CD8-positive, alpha-beta memory T cell (primary cell): ENCODE measurements at regions of chr15 and their contacts with region 1.

Region 1: GRCh38 chr15:84633311-84634227 is 20.5 kb downstream of the WDR73 start:
- DNase-seq: peak; percentile 44 to 75 (median 63)
- H3K4me3 ChIP-seq: peak overlapping the region; percentile 82
- H3K4me3 Mint-ChIP-seq: peak overlapping the region; percentile 86 to 99 (median 95)
- H3K27ac ChIP-seq: peak overlapping the region; percentile 66
- H3K27ac Mint-ChIP-seq: peak overlapping the region; percentile 89 to 97 (median 94)
- H3K4me1 ChIP-seq: peaks cover 52% of the 10 kb centered on the region
- H3K4me1 Mint-ChIP-seq: peaks cover 41 to 54% (median 49%) of the 10 kb centered on the region in 3 donors
- H3K27me3 ChIP-seq: no peaks in the 10 kb centered on the region
- H3K27me3 Mint-ChIP-seq: peaks cover 0 to 2% of the 10 kb centered on the region in 2 donors

Region 2: DNA sequence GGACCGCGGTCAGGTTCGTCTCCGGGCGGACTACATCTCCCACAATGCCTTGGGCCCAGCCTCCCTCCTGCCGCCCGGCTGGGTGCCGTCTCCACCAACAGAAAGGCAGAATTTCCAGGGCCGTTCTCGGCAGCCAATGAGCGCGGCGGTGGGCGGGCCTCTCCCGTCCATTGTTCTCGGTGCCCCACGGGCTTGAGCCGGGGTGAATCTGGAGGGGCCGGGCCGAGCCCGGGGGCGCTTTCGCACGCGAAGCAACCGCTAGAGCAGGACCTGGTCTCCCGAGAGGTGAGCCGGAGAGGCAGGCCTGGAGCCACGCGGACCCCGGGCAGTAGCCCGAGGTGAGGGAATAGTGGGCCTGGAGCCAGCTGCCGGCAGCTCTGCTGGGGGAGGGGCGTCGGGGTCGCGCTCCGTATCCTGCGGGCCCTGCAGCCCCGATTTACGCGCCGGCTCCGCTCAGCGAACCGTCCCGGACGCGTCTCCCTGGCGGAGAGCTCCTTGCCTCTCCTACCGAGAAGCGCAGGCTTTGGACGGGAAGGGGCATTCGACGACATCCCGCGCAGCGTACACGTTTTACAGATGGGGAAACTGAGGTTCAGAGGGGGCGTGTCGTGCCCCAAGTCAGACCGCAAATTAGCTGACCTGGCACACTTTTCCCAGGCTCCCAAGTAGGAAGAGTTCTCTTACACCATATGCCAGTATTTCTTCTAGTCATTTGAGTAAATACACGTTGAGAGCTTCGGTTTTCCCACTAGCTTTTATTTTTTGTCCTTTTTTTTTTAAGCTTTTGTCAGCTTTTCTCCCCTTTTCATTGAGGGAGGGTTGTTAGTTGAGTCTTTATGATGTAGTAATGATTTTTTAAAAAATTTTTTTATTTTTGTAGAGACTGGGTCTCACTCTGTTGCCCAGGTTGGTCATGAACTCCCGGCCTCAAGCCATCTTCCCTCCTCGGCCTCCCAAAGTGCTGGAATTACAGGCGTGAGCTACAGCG is 32.4 kb before region 1 on chr15 and contains the start of gene ZSCAN2:
- CTCF ChIA-PET with region 1: interaction called, 8 read pairs
- POLR2A ChIA-PET with region 1: interaction called, 23 read pairs
- DNase-seq: peak; percentile 89 to 94 (median 93)
- H3K4me3 ChIP-seq: peak within 1 kb of the TSS; percentile 96
- H3K4me3 Mint-ChIP-seq: peak within 1 kb of the TSS; percentile 94 to 99 (median 98)
- H3K27ac ChIP-seq: peak within 1 kb of the TSS; percentile 60
- H3K27ac Mint-ChIP-seq: peak within 1 kb of the TSS; percentile 58 to 93 (median 84)
- H3K4me1 ChIP-seq: peaks cover 42% of the 10 kb centered on the region
- H3K4me1 Mint-ChIP-seq: peaks cover 57 to 85% (median 82%) of the 10 kb centered on the region in 3 donors
- H3K27me3 ChIP-seq: no peaks in the 10 kb centered on the region
- H3K27me3 Mint-ChIP-seq: no peaks in the 10 kb centered on the region
- total RNA-seq, gene ZSCAN2: 13.5 to 14.3 TPM

Region 3: DNA sequence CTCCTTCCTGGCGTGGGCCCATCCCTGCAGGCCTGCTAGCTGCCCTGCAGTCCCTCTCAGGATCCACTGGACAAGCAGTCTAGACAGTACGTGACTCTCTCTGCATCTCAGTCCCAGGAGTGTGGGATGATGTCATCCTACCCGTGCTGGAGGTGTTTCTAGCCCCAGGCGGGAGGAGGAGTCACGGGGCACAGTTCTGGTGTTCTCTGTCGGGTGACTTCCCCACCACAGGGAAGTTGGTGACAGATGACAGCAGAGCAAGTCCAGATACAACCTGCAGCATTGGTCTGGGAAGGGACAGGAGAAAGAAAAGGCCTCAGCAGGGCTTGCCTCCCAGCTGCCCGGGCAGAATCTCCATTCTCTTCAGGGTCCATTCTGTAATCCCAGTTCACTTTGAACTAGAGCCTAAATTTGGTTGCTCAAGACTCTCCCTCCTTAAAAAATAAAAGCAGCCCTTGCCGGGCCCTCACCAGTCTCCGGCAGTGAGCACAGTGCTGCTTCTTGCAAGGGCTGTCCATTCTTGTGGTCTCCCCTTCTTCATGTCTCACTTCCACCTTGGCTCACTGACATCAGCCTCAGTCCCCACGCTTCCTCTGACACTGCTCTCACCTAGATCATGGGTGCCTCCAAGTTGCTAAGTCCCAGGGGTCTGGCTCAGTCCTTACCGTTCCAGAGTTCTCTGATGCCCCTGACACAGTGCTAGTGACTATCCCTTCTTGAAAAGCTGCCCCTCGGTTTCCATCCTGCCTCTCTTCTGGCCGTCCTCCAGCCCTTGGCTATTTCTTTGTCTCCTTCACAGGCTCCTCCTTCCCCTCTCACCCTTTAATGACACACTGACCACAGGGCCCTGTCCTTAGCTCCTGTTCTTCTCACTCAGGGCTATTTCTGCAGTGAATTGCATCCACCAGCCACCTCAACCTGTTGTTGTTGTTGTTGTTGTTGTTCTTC is 281.7 kb after region 1 on chr15:
- CTCF ChIA-PET with region 1: no interaction called
- POLR2A ChIA-PET with region 1: no interaction called
- DNase-seq: no peak
- H3K4me3 ChIP-seq: no peak overlapping the region
- H3K4me3 Mint-ChIP-seq: no peak overlapping the region
- H3K27ac ChIP-seq: peak overlapping the region; percentile 62
- H3K27ac Mint-ChIP-seq: peak overlapping the region in 2 of 8 donors; percentile 61 to 77
- H3K4me1 ChIP-seq: no peaks in the 10 kb centered on the region
- H3K4me1 Mint-ChIP-seq: no peaks in the 10 kb centered on the region
- H3K27me3 ChIP-seq: no peaks in the 10 kb centered on the region
- H3K27me3 Mint-ChIP-seq: peaks cover 5 to 9% of the 10 kb centered on the region in 2 donors